H1 (cell line): ENCODE measurements at regions of chr19 and their contacts with region 1.

Region 1: DNA sequence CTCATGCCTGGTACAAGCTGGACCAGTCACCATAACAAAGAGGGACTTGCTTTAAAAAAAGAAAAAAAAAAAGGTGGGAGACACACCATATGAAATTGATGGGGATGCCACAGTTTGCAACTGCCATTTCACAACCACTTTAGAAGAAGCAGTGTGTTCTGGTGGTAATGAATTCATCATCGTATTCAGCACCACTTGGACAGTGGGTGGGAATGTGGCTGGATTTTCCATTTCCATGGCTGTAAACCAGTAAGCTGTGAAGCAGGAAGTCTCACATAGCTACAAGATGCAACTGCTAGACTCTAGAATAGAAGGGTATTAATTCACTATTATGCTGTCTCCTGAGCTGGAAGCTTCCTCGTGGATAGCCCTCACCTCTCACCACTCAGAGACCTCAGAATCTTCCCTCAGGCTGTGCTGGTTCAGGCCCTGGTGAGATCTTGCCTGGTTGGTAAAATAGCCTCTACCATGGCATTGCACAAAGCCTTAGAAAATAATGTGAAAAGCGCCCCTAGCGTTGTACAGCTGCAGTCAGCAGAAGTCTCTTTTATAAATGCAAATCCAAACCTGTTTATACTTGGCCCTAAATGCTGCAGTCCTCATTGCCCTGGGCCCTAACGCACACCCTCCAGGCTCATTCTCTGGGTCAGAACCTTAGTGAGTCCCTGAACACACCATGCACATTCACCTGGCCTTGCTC is 150.7 kb downstream of the KCTD15 start:
- DNase-seq: no peak
- H3K4me3 ChIP-seq: no peak overlapping the region
- H3K27ac ChIP-seq: no peak overlapping the region
- H3K4me1 ChIP-seq: peaks cover 0 to 4% (median 0%) of the 10 kb centered on the region in 4 experiments; a peak in 1 of 7 replicates
- H3K27me3 ChIP-seq: no peaks in the 10 kb centered on the region
- CTCF ChIP-seq: peak in 1 of 3 experiments; percentile 49; a peak in 1 of 4 replicates
- EP300 ChIP-seq: no peak
- POLR2A ChIP-seq: no peak
- RAD21 ChIP-seq: peak; percentile 21 to 28; a peak in 2 of 4 replicates

Region 2: DNA sequence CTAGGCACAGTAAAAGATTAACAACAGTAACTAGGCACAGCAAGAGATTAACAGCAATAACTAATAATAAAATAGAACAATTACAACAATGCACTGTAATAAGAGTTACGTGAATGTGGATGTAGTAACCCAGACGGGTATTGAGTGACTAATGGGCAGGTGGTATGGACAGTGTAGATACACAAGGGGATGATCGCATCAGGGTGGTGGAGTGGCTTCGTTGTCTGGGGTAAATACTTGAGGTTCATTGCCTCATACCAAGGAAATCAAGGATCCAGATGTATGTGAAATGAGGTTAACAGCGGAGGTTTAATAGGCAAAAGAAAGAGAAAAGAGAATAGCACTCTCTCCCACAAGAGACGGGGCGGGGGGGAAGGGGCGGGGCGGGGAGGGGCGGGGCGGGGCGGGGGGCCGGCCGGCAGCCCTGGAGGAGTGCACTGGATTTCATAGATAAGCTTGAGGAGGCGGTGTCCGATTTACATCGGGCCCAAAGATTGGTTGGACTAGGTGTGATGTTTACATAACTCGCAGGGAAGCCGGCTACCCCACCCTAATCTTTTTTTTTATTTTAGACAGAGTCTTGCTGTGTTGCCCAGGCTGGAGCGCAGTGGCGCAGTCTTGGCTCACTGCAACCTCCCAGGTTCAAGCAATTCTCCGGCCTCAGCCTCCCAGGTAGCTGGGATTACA is 44.5 kb before region 1 on chr19:
- CTCF ChIA-PET with region 1: no interaction called
- POLR2A ChIA-PET with region 1: no interaction called
- DNase-seq: no peak
- H3K4me3 ChIP-seq: no peak overlapping the region
- H3K27ac ChIP-seq: no peak overlapping the region
- H3K4me1 ChIP-seq: peaks cover 4 to 10% (median 6%) of the 10 kb centered on the region in 4 experiments; a peak in 5 of 7 replicates
- H3K27me3 ChIP-seq: no peaks in the 10 kb centered on the region; a peak in 2 of 7 replicates
- CTCF ChIP-seq: no peak
- EP300 ChIP-seq: no peak
- POLR2A ChIP-seq: no peak
- RAD21 ChIP-seq: no peak

Region 3: DNA sequence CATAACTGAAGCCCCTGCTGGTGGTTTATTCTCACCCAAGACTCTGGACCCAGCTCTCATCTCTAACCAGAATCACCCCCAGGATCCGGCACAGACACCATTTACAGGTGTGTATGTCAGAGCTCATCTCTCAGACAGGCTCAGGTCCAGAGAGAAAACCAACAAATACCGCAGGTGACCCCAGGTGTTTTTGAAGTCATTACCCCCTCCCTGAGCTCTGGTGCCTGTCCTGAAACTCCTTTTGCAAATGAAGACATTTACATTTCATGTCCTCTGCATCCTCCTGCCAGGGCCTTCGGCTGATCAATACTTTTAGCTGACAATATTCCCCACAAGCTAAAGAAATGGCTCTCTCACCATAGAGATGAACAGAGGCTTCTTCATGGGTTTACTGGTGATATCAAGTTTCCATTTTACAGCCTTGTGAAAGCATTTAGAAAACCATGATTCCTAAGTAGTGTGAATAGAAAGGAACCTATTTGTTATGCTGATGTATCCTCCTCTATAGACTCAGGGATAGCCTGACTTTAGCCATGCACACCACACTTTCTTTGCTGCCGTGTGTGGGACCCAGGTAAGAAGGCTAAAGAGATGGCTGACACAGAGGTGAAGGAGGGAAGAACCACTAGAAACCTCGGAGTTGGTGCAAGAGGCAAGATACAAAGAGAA is 19.5 kb before region 1 on chr19:
- CTCF ChIA-PET with region 1: interaction called, 15 read pairs
- POLR2A ChIA-PET with region 1: no interaction called
- DNase-seq: no peak
- H3K4me3 ChIP-seq: peak overlapping the region in 1 of 4 experiments; percentile 24; a peak in 1 of 8 replicates
- H3K27ac ChIP-seq: no peak overlapping the region
- H3K4me1 ChIP-seq: peaks cover 6 to 17% (median 11%) of the 10 kb centered on the region in 4 experiments
- H3K27me3 ChIP-seq: no peaks in the 10 kb centered on the region
- CTCF ChIP-seq: no peak
- EP300 ChIP-seq: no peak
- POLR2A ChIP-seq: no peak
- RAD21 ChIP-seq: no peak

Region 4: DNA sequence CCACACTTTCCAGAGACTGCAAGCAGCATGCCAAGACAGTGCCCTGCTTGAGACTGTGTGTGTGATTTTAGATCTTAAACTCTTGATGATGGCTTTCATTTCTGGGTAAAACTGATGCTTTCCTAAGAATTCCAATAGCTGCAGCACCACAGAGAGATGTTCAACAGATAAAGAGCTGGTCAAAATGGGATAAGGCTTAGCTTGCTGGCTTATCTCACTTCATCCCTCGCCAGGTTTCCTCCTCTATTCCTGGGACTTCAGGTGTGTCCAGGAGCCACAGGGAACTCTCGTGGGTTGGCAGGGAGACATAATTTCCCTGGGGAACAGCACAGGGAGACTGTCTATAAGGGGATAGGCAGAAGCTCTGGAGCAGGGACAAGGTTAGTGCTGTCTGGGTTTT is 13.5 kb before region 1 on chr19:
- CTCF ChIA-PET with region 1: interaction called, 15 read pairs
- POLR2A ChIA-PET with region 1: no interaction called
- DNase-seq: no peak
- H3K4me3 ChIP-seq: no peak overlapping the region
- H3K27ac ChIP-seq: no peak overlapping the region
- H3K4me1 ChIP-seq: peaks cover 0 to 2% (median under 1%) of the 10 kb centered on the region in 4 experiments; a peak in 3 of 7 replicates
- H3K27me3 ChIP-seq: no peaks in the 10 kb centered on the region
- CTCF ChIP-seq: no peak
- EP300 ChIP-seq: no peak
- POLR2A ChIP-seq: no peak
- RAD21 ChIP-seq: no peak